ENCODE measurements at regions of chr1 and their contacts with region 1.

Region 1: GRCh38 chr1:231357831-231358354 is 19.8 kb downstream of the SPRTN start:
- DNase-seq: peak; percentile 57
- ATAC-seq: peak; percentile 93
- H3K4me3 ChIP-seq: no peak overlapping the region
- H3K27ac ChIP-seq: no peak overlapping the region
- H3K4me1 ChIP-seq: peaks cover 5% of the 10 kb centered on the region; the same call in 1 of the 2 replicates
- H3K27me3 ChIP-seq: no peaks in the 10 kb centered on the region
- CTCF ChIP-seq: peak; percentile 76

Region 2: DNA sequence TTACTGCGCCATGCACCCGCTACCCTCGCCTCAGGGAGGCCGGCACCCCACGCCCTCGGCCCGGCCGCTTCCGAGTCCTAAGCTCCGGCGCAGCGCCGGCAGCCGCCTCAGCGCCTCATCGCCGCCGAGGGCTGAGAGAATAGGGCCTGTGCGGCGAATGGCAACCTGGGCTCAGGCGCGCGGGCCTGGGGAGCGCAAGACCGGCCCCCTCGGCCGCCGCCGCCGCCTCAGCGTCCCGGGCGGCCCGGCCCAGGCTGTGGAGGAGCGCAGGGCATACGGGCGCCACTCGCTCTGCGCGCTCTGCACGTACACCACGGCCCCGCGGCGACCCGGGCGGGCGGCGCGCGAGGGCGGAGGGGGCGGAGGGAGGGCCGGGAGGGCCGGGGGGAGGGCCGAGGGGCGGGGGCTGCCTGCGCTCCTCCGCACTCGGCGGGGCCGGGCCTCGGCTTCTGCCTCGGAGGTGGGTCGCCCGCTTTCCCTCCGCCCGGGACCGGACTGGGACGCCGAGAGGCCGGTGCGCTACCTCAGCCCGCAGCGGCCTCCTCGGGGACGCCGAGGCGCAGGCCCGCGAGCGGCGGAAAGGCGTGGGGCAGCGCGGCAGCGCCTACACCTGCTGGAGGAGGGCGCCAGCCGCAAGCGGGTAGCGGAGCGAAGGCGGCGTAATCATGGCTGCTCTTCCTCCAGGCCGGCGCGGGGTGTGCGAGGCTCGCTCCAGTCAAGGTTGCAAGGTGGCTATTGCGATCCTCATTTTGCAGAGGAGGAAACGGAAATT is 64.3 kb after region 1 on chr1 and contains the start of gene EGLN1:
- CTCF ChIA-PET with region 1: no interaction called
- POLR2A ChIA-PET with region 1: no interaction called
- in situ Hi-C with region 1: no loop called
- intact Hi-C with region 1: loop called (anchors 5 kb)
- DNase-seq: peak; percentile 62
- ATAC-seq: peak; percentile 94
- H3K4me3 ChIP-seq: peak within 1 kb of the TSS; percentile 72 to 79
- H3K27ac ChIP-seq: peak within 1 kb of the TSS; percentile 95
- H3K4me1 ChIP-seq: peaks cover 38% of the 10 kb centered on the region
- H3K27me3 ChIP-seq: no peaks in the 10 kb centered on the region
- CTCF ChIP-seq: peak; percentile 62
- total RNA-seq, gene EGLN1: 29.0 TPM

Region 3: DNA sequence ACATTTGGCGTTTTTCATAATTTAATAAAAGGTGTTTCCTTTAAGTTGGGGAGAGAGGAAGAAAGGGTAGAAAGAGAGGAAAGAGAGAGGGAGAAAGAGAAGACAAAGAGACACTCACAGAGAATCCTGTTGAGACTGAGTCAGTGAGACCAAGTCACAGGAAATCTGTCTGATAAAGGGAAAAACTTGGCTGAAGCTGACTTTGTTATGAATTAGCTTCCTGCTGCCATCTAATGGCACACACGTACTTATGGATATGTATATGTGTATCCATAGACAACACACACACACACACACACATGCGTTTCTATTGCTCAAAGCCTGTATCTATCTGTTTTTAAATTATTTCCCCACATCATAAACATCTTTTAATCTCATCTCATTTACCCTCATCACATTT is 226.2 kb after region 1 on chr1:
- CTCF ChIA-PET with region 1: interaction called, 3 read pairs
- POLR2A ChIA-PET with region 1: no interaction called
- in situ Hi-C with region 1: no loop called
- intact Hi-C with region 1: loop called (anchors 2 kb)
- DNase-seq: peak; percentile 32
- ATAC-seq: peak; percentile 75
- H3K4me3 ChIP-seq: no peak overlapping the region
- H3K27ac ChIP-seq: no peak overlapping the region
- H3K4me1 ChIP-seq: no peaks in the 10 kb centered on the region
- H3K27me3 ChIP-seq: no peaks in the 10 kb centered on the region
- CTCF ChIP-seq: peak; percentile 48; the same call in 1 of the 2 replicates

Region 4: GRCh38 chr1:231590453-231591198 is 232.7 kb after region 1 on chr1:
- CTCF ChIA-PET with region 1: interaction called, 3 read pairs
- POLR2A ChIA-PET with region 1: no interaction called
- in situ Hi-C with region 1: no loop called
- intact Hi-C with region 1: loop called (anchors 2 kb)
- DNase-seq: peak; percentile 36
- ATAC-seq: peak; percentile 96
- H3K4me3 ChIP-seq: no peak overlapping the region
- H3K27ac ChIP-seq: no peak overlapping the region
- H3K4me1 ChIP-seq: no peaks in the 10 kb centered on the region
- H3K27me3 ChIP-seq: no peaks in the 10 kb centered on the region
- CTCF ChIP-seq: peak; percentile 86

Measured in Panc1 (cell line).